Activated CD8-positive, alpha-beta T cell treated with anti-CD3 and anti-CD28 coated beads, Interleukin-2, amount 10 ng/mL, durations not matched to agents 7 days and 5 days (primary cell): ENCODE measurements at regions of chr7 and their contacts with region 1.

Region 1: GRCh38 chr7:116271963-116272839 is 61.9 kb downstream of the TES start:
- DNase-seq: no peak
- ATAC-seq: no peak
- H3K4me3 Mint-ChIP-seq: no peak overlapping the region
- H3K27ac Mint-ChIP-seq: no peak overlapping the region
- H3K4me1 Mint-ChIP-seq: no peaks in the 10 kb centered on the region
- H3K27me3 Mint-ChIP-seq: peaks cover 40% of the 10 kb centered on the region

Region 2: DNA sequence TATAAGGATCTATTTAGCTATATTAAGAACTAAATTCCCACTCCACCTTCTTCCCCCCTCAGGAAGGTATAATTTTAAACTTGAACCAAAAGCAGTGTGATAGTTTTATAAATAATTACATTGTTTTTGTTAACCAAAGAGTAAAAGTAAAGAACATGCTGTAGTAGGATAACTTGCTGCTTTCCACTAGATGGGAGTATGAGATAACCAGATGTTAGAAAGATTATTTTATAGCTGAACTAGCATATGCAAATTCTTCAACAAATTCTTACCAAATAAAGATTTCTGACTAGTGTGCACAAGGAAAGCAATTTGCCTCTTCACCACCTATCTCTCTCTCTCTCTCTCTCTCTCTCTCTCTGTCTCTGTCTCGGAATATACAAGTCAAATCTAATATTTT is 30.0 kb before region 1 on chr7:
- CTCF ChIA-PET with region 1: no interaction called
- POLR2A ChIA-PET with region 1: no interaction called
- DNase-seq: no peak
- ATAC-seq: no peak
- H3K4me3 Mint-ChIP-seq: no peak overlapping the region
- H3K27ac Mint-ChIP-seq: no peak overlapping the region
- H3K4me1 Mint-ChIP-seq: peaks cover 13% of the 10 kb centered on the region
- H3K27me3 Mint-ChIP-seq: no peaks in the 10 kb centered on the region

Region 3: GRCh38 chr7:116258734-116259133 is 13.5 kb before region 1 on chr7:
- CTCF ChIA-PET with region 1: interaction called, 11 read pairs
- POLR2A ChIA-PET with region 1: no interaction called
- DNase-seq: peak; percentile 54
- ATAC-seq: no peak
- H3K4me3 Mint-ChIP-seq: no peak overlapping the region
- H3K27ac Mint-ChIP-seq: no peak overlapping the region
- H3K4me1 Mint-ChIP-seq: peaks cover 8% of the 10 kb centered on the region
- H3K27me3 Mint-ChIP-seq: peaks cover 2% of the 10 kb centered on the region

Region 4: GRCh38 chr7:116290740-116291139 is 18.5 kb after region 1 on chr7:
- CTCF ChIA-PET with region 1: no interaction called
- POLR2A ChIA-PET with region 1: no interaction called
- DNase-seq: no peak
- ATAC-seq: no peak
- H3K4me3 Mint-ChIP-seq: no peak overlapping the region
- H3K27ac Mint-ChIP-seq: no peak overlapping the region
- H3K4me1 Mint-ChIP-seq: no peaks in the 10 kb centered on the region
- H3K27me3 Mint-ChIP-seq: peaks cover 7% of the 10 kb centered on the region